ENCODE measurements at regions of chr17 and their contacts with region 1.

Region 1: DNA sequence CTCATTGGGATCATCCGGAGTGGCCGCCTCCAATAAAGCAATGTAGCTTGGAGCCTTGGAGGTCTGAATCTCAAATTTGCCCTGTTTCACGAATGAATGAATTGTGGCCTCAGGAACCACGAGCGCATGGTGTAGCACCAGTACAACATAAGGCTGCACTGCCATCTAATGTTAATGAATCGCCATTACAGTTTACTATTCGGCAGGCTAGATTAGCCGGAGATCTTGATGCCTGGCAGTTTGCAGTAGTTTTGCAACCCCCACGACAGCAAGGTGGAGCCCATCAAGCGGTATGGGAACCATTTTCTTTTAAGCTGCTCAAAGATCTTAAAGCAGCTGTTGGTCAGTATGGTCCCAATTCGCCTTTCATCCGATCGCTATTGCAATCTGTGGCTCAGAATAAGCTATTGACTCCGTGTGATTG is 18.8 kb downstream of the ALOX15B start:
- DNase-seq: peak; percentile 31 to 83
- ATAC-seq: peak; percentile 83 to 90 (median 85)
- H3K4me3 ChIP-seq: no peak overlapping the region
- H3K4me3 Mint-ChIP-seq: peak overlapping the region; percentile 45
- H3K27ac ChIP-seq: no peak overlapping the region
- H3K27ac Mint-ChIP-seq: no peak overlapping the region
- H3K4me1 ChIP-seq: peaks cover 30% of the 10 kb centered on the region
- H3K4me1 Mint-ChIP-seq: peaks cover 23 to 36% of the 10 kb centered on the region in 2 donors
- H3K27me3 ChIP-seq: peaks cover 9% of the 10 kb centered on the region
- H3K27me3 Mint-ChIP-seq: peaks cover 17 to 41% of the 10 kb centered on the region in 2 donors
- CTCF ChIP-seq: peak; percentile 81

Region 2: DNA sequence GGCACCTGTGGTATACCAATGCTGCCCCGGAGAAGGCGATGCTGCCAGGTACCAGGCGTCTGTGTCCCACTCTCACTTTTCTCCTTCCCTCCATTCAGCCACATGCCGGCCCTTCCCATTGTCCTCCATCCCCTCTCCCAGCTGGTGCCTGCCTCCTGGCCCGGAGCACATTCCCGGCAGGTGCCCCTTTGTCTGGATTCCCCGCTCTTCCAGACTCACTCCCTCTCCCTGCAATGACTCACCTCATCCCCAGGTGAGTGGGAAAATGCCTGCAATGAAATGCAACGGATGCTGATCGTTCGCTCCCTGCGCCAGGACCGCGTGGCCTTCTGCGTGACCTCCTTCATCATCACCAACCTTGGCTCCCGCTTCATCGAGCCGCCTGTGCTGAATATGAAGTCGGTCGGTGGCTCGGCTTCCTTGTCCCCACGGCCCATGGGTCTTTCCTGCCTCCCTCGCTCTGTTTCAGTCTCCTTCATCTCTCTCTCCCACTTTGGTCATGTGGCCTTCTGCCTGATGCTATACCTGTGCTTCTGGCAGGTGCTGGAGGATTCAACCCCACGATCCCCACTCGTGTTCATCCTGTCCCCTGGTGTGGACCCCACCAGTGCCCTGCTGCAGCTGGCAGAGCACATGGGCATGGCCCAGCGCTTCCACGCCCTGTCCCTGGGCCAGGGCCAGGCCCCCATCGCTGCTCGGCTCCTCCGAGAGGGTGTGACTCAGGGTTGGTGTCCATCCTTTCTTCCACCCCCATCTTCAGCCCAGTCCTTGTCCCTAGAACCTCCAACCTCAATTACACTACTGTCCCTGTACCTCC is 233.9 kb before region 1 on chr17:
- intact Hi-C with region 1: loop called (anchors 5 kb)
- DNase-seq: no peak
- ATAC-seq: no peak
- H3K4me3 ChIP-seq: no peak overlapping the region
- H3K4me3 Mint-ChIP-seq: no peak overlapping the region
- H3K27ac ChIP-seq: no peak overlapping the region
- H3K27ac Mint-ChIP-seq: no peak overlapping the region
- H3K4me1 ChIP-seq: no peaks in the 10 kb centered on the region
- H3K4me1 Mint-ChIP-seq: no peaks in the 10 kb centered on the region
- H3K27me3 ChIP-seq: no peaks in the 10 kb centered on the region
- H3K27me3 Mint-ChIP-seq: peaks cover 8 to 19% of the 10 kb centered on the region in 2 donors
- CTCF ChIP-seq: no peak

Region 3: GRCh38 chr17:7915611-7916382 is 141.9 kb before region 1 on chr17 and contains the start of gene RNF227:
- intact Hi-C with region 1: loop called (anchors 1 kb)
- DNase-seq: peak; percentile 82 to 92
- ATAC-seq: peak; percentile 81 to 90 (median 86)
- H3K4me3 ChIP-seq: peak within 1 kb of the TSS; percentile 51
- H3K4me3 Mint-ChIP-seq: peak within 1 kb of the TSS; percentile 94
- H3K27ac ChIP-seq: peak within 1 kb of the TSS; percentile 84
- H3K27ac Mint-ChIP-seq: peak within 1 kb of the TSS; percentile 81 to 92
- H3K4me1 ChIP-seq: peaks cover 23% of the 10 kb centered on the region
- H3K4me1 Mint-ChIP-seq: peaks cover 26 to 30% of the 10 kb centered on the region in 2 donors
- H3K27me3 ChIP-seq: no peaks in the 10 kb centered on the region
- H3K27me3 Mint-ChIP-seq: no peaks in the 10 kb centered on the region
- CTCF ChIP-seq: no peak
- total RNA-seq, gene RNF227: 3.6 to 5.9 (median 4.7) TPM

Region 4: DNA sequence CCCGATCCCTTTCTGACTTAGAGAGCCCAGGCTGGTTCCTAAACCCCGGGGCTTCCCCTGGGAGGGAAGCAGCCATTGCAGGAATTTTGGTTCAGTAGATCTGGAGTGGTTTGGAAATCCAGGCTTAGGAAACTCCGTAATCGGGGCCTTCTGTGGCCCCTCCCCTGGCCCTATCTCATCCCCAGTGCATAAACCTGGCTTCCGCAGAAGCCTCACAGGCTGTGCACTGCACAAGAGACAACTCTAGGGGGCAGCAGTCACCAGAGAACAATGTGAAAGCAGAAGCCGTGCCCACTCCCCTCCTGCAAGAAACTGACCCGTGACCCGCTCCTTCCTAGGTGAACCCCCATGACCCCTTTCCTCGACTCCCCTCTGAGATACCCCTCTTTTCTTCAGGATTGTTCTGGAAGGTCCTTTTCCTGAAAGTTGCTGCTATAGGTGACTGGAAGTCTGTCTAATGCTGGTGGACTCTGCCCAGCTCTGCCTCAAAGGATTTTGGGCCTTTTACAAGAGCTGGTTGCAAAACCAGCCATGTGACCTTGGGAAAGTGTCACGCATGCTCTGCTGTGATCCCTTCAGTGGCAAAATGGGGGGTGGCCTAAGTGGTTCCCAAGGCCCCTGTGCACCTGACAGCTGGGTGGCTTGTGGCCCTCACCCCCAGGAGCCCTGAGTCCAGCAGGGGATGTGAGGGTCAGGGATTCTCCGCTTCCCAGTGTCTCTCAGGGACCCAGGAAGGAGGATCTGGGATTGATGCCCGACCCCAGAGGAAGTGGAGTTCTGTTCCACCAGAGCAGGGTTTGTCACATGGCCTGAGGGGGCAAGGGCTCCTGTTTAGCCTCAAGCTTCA is 40.8 kb before region 1 on chr17:
- intact Hi-C with region 1: loop called (anchors 5 kb)
- DNase-seq: peak in 1 of 2 donors; percentile 62
- ATAC-seq: peak; percentile 75 to 89 (median 86)
- H3K4me3 ChIP-seq: peak overlapping the region; percentile 21
- H3K4me3 Mint-ChIP-seq: peak overlapping the region; percentile 81
- H3K27ac ChIP-seq: no peak overlapping the region
- H3K27ac Mint-ChIP-seq: no peak overlapping the region
- H3K4me1 ChIP-seq: peaks cover 42% of the 10 kb centered on the region
- H3K4me1 Mint-ChIP-seq: peaks cover 8 to 22% of the 10 kb centered on the region in 2 donors
- H3K27me3 ChIP-seq: peaks cover 10% of the 10 kb centered on the region
- H3K27me3 Mint-ChIP-seq: peaks cover 0 to 26% of the 10 kb centered on the region in 2 donors
- CTCF ChIP-seq: peak; percentile 60

Region 5: GRCh38 chr17:8109661-8110464 is 52.2 kb after region 1 on chr17:
- intact Hi-C with region 1: loop called (anchors 2 kb)
- DNase-seq: peak; percentile 71 to 92
- ATAC-seq: peak; percentile 82 to 98 (median 97)
- H3K4me3 ChIP-seq: peak overlapping the region; percentile 31
- H3K4me3 Mint-ChIP-seq: peak overlapping the region; percentile 26
- H3K27ac ChIP-seq: no peak overlapping the region
- H3K27ac Mint-ChIP-seq: no peak overlapping the region
- H3K4me1 ChIP-seq: peaks cover 9% of the 10 kb centered on the region
- H3K4me1 Mint-ChIP-seq: peaks cover 0 to 4% of the 10 kb centered on the region in 2 donors
- H3K27me3 ChIP-seq: peaks cover 26% of the 10 kb centered on the region
- H3K27me3 Mint-ChIP-seq: peaks cover 33 to 45% of the 10 kb centered on the region in 2 donors
- CTCF ChIP-seq: peak; percentile 95

Measured in natural killer cell (primary cell).